Cardiac septum (tissue), 1 donor: ENCODE measurements at regions of chr22 and their contacts with region 1.

Region 1: GRCh38 chr22:45640291-45640940 is 31.2 kb upstream of the ATXN10 start:
- DNase-seq: peak; percentile 43

Region 2: DNA sequence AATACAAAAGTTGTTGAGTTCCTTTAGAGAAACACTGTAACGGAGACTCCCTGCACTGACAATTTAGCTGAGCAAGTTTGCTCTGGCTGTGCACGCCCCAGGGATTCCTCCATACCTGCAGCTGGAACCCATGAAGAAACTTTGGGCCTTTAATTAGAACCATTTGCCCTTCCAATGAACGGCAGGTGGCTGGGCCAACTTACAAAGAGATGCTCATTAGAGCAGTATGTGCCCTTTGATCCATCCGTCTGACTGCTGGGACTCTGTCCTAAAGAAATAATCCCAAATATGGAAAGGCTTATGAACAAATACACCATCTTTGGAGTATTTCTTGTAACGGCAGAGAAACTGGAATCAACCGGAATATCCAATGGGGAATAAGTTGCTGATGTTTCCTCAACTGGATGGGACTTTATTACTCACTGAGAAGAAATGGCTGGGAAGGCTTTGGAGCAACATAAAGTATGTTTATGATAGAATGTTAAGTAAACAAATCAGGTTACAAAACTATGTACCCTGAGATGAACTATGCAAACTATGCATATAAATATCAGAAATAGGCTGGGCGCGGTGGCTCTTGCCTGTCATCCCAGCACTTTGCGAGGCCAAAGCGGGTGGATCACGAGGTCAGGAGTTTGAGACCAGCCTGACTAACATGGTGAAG is 162.2 kb before region 1 on chr22:
- intact Hi-C with region 1: no loop called
- DNase-seq: no peak

Region 3: DNA sequence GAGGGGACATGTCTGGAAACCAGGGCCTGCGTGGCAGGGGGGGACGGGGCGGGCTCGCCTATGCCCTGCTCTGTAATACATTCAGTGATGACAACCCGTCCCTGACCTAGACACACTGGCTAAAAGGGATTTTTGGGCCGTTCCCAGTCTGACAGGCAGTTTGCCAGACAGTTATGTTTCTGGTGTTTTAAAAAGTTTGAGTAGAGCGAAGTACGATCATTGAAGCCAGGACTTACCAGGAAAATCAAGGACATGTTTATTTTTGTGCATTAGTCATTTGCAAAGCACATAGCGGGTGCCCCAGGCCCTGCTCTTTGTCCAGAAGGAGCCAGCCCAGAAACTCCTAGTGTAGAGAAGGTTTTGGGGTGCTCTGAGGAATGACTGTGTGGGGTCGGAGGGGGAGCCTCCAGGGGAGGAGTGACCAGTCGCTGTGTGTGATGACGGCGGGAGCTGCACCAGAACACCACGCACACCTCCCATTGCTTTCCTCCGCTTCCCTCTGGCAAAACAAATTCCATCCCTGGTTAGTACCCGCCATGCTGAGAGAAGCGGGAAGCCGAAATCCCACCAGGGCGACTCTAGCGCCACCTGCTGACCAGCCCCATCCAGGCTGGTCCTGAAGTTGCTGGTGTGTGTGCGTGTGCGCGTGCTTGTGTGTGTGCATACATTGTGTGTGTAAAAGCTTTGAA is 86.9 kb before region 1 on chr22:
- intact Hi-C with region 1: no loop called
- DNase-seq: no peak

Region 4: GRCh38 chr22:45577746-45578523 is 62.5 kb before region 1 on chr22:
- intact Hi-C with region 1: loop called (anchors 5 kb)
- DNase-seq: peak; percentile 87

Region 5: GRCh38 chr22:45602824-45603630 is 37.4 kb before region 1 on chr22:
- intact Hi-C with region 1: no loop called
- DNase-seq: no peak